GM10248 (cell line): ENCODE measurements at regions of chr2 and their contacts with region 1.

Region 1: GRCh38 chr2:176814306-176815052 is 398.1 kb upstream of the HNRNPA3 start:
- DNase-seq: peak; percentile 49
- CTCF ChIP-seq: peak; percentile 42

Region 2: GRCh38 chr2:176392249-176392648 is 422.2 kb before region 1 on chr2:
- CTCF ChIA-PET with region 1: no interaction called
- POLR2A ChIA-PET with region 1: no interaction called
- DNase-seq: no peak
- CTCF ChIP-seq: no peak

Region 3: GRCh38 chr2:176804392-176804791 is 10.1 kb before region 1 on chr2:
- CTCF ChIA-PET with region 1: interaction called, 40 read pairs
- POLR2A ChIA-PET with region 1: no interaction called
- DNase-seq: no peak
- CTCF ChIP-seq: no peak

Region 4: DNA sequence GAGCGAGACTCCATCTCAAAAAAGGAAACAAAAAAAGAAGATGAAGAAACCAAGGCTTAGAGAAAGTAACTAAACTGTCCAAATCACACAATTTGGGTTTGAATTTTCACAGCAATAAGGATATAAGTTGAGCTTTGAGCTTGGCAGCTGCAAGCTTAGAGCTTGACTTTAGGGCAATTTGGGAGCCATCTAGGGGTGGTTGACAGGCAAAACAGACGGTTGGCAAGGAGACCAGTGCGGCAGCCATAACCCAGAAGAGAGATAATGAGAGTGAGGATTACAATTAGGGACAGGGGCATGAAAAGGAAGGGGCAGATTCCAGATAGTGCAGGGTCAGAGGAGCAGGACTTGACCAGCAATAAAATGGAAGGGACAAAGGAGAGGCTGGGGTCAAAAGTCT is 15.9 kb after region 1 on chr2:
- CTCF ChIA-PET with region 1: interaction called, 38 read pairs
- POLR2A ChIA-PET with region 1: no interaction called
- DNase-seq: no peak
- CTCF ChIP-seq: no peak

Region 5: DNA sequence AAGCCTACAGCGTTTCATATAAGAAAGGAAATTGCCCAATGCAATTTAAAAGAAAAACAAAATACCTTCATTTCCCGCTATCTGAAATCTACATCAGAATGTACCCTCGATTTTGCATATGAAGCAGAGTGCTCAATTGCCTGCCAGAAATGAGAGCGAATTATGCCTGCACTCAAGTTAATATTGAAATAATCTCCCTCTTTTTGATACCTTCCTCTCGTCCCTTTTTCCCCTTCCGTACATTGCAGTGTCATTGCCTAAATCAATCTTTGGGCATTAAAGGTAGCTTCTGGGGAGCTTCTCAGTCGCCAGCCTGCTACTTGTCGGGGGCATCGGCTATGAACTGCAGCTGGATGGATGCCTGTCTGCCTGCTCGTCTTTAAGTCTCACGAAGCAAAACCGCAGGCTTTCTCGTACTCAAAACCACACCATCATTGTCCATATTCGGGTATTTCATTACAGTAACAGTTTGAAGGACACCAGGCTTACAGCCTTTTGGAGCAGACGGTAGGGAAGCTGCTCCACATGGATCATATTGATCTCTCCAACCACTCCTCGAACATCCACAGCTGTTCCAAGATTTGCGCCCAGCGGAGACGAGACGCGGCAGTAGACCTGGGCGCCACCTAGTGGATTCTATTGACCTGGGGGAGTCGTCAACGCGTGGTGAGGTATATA is 334.1 kb after region 1 on chr2:
- CTCF ChIA-PET with region 1: interaction called, 19 read pairs
- POLR2A ChIA-PET with region 1: no interaction called
- DNase-seq: peak; percentile 57
- CTCF ChIP-seq: peak; percentile 93